Activated naive CD4-positive, alpha-beta T cell treated with anti-CD3 and anti-CD28 coated beads for 36 hours (primary cell): ENCODE measurements at regions of chr6 and their contacts with region 1.

Region 1: GRCh38 chr6:16319813-16320532 is 81.6 kb downstream of the GMPR start:
- DNase-seq: peak; percentile 86
- H3K4me3 Mint-ChIP-seq: peak overlapping the region; percentile 54
- H3K27ac Mint-ChIP-seq: peak overlapping the region; percentile 85
- H3K4me1 Mint-ChIP-seq: peaks cover 75% of the 10 kb centered on the region
- H3K27me3 Mint-ChIP-seq: no peaks in the 10 kb centered on the region

Region 2: GRCh38 chr6:15911753-15912504 is 408.0 kb before region 1 on chr6:
- CTCF ChIA-PET with region 1: interaction called, 3 read pairs
- intact Hi-C with region 1: loop called (anchors 5 kb)
- DNase-seq: peak; percentile 69
- H3K4me3 Mint-ChIP-seq: no peak overlapping the region
- H3K27ac Mint-ChIP-seq: no peak overlapping the region
- H3K4me1 Mint-ChIP-seq: peaks cover 31% of the 10 kb centered on the region
- H3K27me3 Mint-ChIP-seq: peaks cover 2% of the 10 kb centered on the region

Region 3: DNA sequence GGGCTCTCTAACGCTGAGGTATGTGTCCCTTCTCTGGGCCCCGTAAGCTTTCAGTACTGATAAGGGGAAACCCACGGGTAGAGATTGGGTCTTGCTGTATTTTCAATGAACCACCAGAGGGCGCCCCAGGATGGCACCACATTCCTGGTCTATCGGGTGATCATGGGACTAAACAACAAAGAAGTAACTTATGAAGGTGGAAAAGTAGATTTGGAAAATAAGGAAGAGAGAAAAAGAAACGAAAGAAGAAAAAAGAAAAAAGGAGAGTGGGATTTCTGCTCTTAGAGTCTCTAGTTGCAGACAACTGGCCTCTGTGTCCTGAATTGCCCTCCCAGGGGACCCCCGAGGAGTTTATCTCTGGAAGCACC is 12.2 kb after region 1 on chr6:
- CTCF ChIA-PET with region 1: interaction called, 64 read pairs
- intact Hi-C with region 1: loop called (anchors 1 kb)
- DNase-seq: peak; percentile 94
- H3K4me3 Mint-ChIP-seq: no peak overlapping the region
- H3K27ac Mint-ChIP-seq: no peak overlapping the region
- H3K4me1 Mint-ChIP-seq: no peaks in the 10 kb centered on the region
- H3K27me3 Mint-ChIP-seq: no peaks in the 10 kb centered on the region

Region 4: GRCh38 chr6:16481697-16482399 is 161.9 kb after region 1 on chr6:
- CTCF ChIA-PET with region 1: interaction called, 4 read pairs
- intact Hi-C with region 1: loop called (anchors 1 kb)
- DNase-seq: peak; percentile 79
- H3K4me3 Mint-ChIP-seq: peak overlapping the region; percentile 32
- H3K27ac Mint-ChIP-seq: peak overlapping the region; percentile 75
- H3K4me1 Mint-ChIP-seq: peaks cover 70% of the 10 kb centered on the region
- H3K27me3 Mint-ChIP-seq: no peaks in the 10 kb centered on the region

Region 5: DNA sequence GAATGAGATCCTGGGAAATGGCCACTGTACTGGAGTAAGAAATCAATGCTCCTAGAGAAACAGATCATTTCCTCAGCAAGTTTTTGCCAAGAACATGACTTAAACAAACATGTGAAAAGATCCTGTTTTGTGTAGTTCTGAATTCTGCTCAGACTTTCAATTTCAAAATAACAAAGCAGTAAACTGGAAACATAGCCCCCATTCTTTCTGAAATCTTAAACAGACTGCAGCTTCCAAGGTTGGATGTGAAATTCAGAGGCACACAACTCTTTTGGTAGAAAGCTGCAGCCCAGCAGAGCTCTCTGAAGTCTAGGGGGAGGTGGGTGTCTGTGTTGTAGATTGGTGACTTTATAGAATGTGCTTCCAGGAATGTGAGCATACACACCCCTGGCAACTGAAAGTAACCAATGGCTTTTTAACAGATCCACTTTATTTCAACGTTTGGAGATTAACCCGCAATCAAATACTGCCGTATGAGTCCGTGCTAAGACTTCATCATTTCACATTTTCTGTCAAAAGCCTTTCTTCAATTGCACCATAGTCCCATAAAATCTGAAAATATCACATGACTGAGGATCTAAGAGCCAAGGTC is 354.9 kb after region 1 on chr6:
- CTCF ChIA-PET with region 1: no interaction called
- intact Hi-C with region 1: no loop called
- DNase-seq: no peak
- H3K4me3 Mint-ChIP-seq: no peak overlapping the region
- H3K27ac Mint-ChIP-seq: no peak overlapping the region
- H3K4me1 Mint-ChIP-seq: peaks cover 33% of the 10 kb centered on the region
- H3K27me3 Mint-ChIP-seq: no peaks in the 10 kb centered on the region

Region 6: DNA sequence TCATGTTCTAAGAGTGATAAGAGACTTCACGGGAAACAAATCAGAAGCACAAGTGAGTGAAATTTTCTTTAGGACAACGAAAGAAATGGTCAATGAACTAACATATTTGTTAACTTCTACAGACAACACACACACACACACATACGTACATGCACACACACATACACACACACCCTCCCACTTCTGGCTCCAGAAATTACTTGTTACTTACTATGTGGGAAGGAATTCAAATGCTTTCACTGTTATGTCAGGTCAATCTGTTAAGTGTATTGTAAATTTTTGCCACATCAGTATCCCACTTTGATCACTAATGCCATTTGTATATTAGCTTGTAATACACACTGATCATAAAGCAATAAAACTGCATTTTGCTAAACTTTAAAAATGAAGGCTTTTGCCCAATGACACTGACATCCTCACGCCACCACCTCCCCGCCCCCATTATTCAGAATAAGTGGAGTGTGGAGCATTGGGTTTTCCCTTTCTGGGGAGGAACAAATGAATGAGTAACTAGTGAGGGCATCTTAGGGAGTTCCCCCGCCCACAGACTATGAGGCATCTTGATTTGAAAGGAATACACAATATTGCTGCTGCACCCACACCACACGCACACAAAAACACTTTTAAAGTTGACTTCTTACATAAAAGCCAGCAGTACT is 365.1 kb after region 1 on chr6:
- CTCF ChIA-PET with region 1: no interaction called
- intact Hi-C with region 1: loop called (anchors 2 kb)
- DNase-seq: peak; percentile 97
- H3K4me3 Mint-ChIP-seq: peak overlapping the region; percentile 20
- H3K27ac Mint-ChIP-seq: peak overlapping the region; percentile 44
- H3K4me1 Mint-ChIP-seq: peaks cover 74% of the 10 kb centered on the region
- H3K27me3 Mint-ChIP-seq: no peaks in the 10 kb centered on the region

Region 7: GRCh38 chr6:17599885-17600526 is 1280.0 kb after region 1 on chr6 and contains the start of gene FAM8A1:
- CTCF ChIA-PET with region 1: no interaction called
- intact Hi-C with region 1: loop called (anchors 5 kb)
- DNase-seq: peak; percentile 98
- H3K4me3 Mint-ChIP-seq: peak within 1 kb of the TSS; percentile 75
- H3K27ac Mint-ChIP-seq: peak within 1 kb of the TSS; percentile 53
- H3K4me1 Mint-ChIP-seq: peaks cover 29% of the 10 kb centered on the region
- H3K27me3 Mint-ChIP-seq: no peaks in the 10 kb centered on the region
- total RNA-seq, gene FAM8A1: 2.9 to 3.0 TPM